Transverse colon (tissue), 4 donors: ENCODE measurements at regions of chr7 and their contacts with region 1.

Region 1: DNA sequence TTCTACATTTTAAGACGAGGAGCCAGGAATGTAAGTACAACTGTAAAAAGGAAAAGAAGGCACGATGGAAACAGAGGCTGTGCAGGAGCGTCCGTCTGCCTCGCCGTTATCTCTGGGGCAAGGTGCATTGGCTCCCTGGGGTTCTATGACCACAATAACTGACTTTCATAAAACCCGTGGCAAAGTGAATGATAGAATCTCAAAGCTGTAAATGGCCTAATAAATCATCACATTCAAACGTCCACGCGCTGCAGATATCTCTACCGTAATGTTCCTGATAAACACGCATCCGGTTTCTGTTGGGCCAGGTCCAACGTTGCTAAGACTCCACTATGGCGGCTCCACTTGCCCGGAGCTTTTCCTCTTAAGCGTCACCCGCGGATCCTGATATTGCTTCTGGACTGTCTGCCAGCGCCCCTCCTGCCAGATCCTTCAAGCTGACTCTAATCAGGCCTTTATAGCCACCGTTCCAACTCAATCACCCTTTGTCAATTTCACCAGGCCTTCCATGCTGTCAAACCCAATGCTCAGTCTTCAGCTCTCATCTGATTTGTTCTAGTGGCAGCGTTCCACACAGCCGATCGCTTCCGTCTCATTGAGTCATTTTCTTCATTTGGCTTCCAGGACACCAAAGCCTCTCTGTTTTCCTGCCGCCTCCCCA is 265.6 kb upstream of the FOXK1 start:
- DNase-seq: peak; percentile 12
- H3K4me3 ChIP-seq: peak overlapping the region in 2 of 4 donors; percentile 13 to 39
- H3K27ac ChIP-seq: no peak overlapping the region
- H3K4me1 ChIP-seq: peaks cover 0 to 8% (median 0%) of the 10 kb centered on the region in 4 donors
- H3K27me3 ChIP-seq: no peaks in the 10 kb centered on the region
- CTCF ChIP-seq: no peak
- EP300 ChIP-seq: no peak
- POLR2A ChIP-seq: no peak

Region 2: DNA sequence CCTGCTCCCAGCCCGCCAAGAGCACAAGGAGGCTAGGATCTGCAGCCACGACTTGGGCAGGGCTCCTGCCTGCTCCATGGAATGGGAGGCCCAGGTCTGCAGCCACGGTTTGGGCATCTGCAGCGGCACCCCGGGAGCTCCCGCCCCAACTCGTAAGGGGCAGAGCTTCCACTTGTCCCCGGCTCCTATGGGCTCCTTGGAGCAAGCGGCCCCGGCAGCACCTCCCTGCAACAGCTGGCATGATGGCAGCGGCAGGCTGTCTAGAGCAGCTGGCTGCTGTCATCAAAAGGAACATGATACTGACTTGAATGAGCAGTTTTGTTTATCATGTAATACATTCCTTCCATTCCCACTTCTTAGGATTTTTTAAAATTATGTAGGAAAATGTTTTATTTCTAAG is 418.5 kb before region 1 on chr7:
- in situ Hi-C with region 1: no loop called
- intact Hi-C with region 1: no loop called
- DNase-seq: no peak
- H3K4me3 ChIP-seq: no peak overlapping the region
- H3K27ac ChIP-seq: no peak overlapping the region
- H3K4me1 ChIP-seq: no peaks in the 10 kb centered on the region
- H3K27me3 ChIP-seq: no peaks in the 10 kb centered on the region
- CTCF ChIP-seq: no peak
- EP300 ChIP-seq: no peak
- POLR2A ChIP-seq: no peak

Region 3: DNA sequence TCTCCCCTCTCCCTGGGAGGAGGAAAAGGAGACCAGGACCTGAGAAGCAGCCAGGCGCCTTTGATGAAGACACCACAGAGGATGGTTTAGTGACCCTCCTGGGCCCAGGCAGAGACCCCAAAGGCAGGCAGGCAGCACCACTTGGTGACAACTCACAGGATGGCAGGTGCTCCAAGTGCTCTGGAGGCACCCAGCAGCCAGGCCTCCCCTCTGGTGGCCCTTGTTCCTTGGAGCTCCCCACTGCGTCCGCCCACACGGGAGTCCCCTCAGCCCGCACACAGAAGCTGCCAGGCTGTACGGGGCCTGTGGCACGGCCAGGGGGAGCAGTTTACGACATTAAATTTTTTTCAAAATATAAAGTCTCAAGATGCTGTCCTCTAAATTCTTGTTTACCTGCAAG is 341.5 kb before region 1 on chr7:
- in situ Hi-C with region 1: no loop called
- intact Hi-C with region 1: loop called (anchors 10 kb)
- DNase-seq: no peak
- H3K4me3 ChIP-seq: no peak overlapping the region
- H3K27ac ChIP-seq: no peak overlapping the region
- H3K4me1 ChIP-seq: no peaks in the 10 kb centered on the region
- H3K27me3 ChIP-seq: no peaks in the 10 kb centered on the region
- CTCF ChIP-seq: no peak
- EP300 ChIP-seq: no peak
- POLR2A ChIP-seq: no peak

Region 4: GRCh38 chr7:4307316-4308204 is 109.0 kb before region 1 on chr7:
- in situ Hi-C with region 1: no loop called
- intact Hi-C with region 1: no loop called
- DNase-seq: no peak
- H3K4me3 ChIP-seq: no peak overlapping the region
- H3K27ac ChIP-seq: no peak overlapping the region
- H3K4me1 ChIP-seq: no peaks in the 10 kb centered on the region
- H3K27me3 ChIP-seq: no peaks in the 10 kb centered on the region
- CTCF ChIP-seq: no peak
- EP300 ChIP-seq: no peak
- POLR2A ChIP-seq: no peak

Region 5: DNA sequence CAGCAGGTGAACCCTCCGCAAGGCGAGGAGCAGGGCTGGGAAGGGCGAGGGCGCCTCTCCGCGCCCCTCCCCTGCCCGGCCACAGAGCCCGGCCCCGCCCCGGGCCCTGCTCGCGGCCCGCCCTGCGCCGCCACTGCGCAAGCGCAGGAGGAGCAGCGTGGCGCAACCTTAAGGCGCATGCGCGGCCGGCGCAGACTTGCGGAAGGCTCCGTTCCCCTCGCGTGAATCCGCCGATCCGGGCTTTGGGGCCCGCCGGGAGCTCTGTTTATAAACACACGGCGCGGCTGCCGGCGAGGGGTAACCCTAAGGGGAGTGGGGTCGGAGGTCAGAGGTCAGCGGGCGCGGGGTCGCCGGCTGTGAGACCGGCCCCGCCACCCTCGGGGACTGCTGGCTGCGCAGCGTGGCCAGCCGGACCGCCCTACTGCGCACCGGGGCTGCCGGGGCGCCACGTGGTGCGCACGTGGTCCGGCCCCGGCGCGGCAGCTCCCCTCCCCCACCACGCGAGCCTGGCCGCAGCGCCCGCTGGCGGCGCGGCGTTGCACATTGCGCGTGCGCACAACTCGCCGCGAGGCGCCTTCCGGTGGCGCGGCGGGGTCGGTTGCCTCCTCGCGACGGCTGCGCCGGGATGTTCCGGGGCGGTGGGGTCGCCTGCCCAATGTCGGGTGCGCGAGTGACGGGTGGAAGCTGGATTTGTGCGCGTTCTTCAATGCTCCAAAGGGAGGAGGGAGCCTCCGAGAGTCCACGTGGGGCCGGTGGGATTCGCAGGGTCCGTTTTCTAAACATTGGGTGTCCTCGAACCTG is 225.3 kb after region 1 on chr7:
- in situ Hi-C with region 1: no loop called
- intact Hi-C with region 1: no loop called
- DNase-seq: peak; percentile 97
- H3K4me3 ChIP-seq: peak overlapping the region; percentile 44 to 77 (median 58)
- H3K27ac ChIP-seq: peak overlapping the region; percentile 87 to 93 (median 90)
- H3K4me1 ChIP-seq: peaks cover 0 to 12% (median 6%) of the 10 kb centered on the region in 4 donors
- H3K27me3 ChIP-seq: no peaks in the 10 kb centered on the region
- CTCF ChIP-seq: peak in 2 of 5 experiments; percentile 22 to 49
- EP300 ChIP-seq: no peak
- POLR2A ChIP-seq: peak; percentile 81